ENCODE measurements at regions of chr21 and their contacts with region 1.

Region 1: DNA sequence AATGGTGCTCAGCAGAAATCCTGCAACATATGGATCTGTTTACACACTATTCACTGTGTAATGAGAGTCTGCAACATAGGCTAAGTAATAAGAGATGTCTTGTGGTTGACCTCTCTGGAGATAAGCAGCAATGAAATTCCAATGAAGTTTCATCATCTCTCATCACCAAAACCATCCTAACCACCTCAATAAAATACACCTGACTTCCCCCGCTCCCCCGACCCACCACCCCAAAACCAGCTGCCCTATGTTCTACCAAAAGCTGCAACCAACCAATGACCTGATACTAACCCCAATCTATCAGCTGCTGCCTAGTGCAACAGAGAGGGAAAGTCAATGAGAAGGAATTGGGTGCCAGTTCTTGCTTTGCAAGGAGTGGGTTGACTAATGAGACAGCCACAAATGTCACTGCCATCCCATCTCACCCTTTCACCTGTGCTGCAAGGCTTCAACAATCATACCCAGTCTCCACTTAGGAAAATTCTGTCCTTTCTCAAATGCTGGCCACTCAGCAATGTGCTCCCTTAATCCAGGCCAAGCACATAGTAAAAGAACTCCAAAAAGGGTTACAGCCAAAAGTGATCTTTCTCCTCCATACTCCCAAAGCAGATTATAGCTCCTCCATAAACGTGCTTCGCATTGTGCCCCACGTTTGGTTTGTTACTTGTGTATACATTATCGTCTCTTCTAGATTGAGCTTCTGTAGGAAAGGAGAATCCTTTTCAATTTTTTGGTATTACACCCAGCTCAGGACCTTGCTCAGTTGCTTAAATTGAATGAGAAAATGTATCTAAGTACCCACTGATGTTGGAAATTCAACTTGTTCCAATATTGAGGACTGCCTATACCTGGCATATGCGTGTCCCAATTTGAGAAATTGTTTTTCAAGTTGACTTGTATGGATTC is 29.0 kb downstream of the MRPL39 start:
- DNase-seq: no peak
- H3K4me3 ChIP-seq: no peak overlapping the region
- H3K27ac ChIP-seq: no peak overlapping the region
- H3K4me1 ChIP-seq: no peaks in the 10 kb centered on the region
- H3K27me3 ChIP-seq: no peaks in the 10 kb centered on the region
- CTCF ChIP-seq: no peak
- POLR2A ChIP-seq: no peak

Region 2: DNA sequence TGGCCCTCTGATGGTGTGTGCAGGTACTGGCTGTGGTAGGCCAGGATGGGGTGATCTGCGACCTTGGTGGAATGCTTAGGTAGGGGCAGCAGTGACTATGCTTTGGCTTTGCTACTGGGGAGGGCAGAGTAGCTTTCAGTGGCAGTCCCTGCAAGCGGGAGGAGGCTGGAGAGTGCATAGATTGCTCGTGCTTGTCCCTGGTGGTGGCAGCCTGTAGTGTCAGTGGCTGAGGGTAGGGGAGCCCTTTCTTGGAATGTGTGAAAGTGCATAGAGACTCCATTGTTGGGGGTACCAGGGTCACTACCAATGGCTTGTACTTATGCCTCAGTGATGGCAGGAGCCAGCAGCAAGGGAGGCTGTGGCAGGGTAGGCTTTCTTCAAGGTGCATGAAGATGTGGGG is 553.7 kb before region 1 on chr21:
- intact Hi-C with region 1: loop called (anchors 5 kb)
- DNase-seq: no peak
- H3K4me3 ChIP-seq: no peak overlapping the region
- H3K27ac ChIP-seq: no peak overlapping the region
- H3K4me1 ChIP-seq: no peaks in the 10 kb centered on the region
- H3K27me3 ChIP-seq: no peaks in the 10 kb centered on the region
- CTCF ChIP-seq: no peak
- POLR2A ChIP-seq: no peak

Region 3: GRCh38 chr21:25385911-25386474 is 192.3 kb before region 1 on chr21:
- intact Hi-C with region 1: no loop called
- DNase-seq: no peak
- H3K4me3 ChIP-seq: no peak overlapping the region
- H3K27ac ChIP-seq: no peak overlapping the region
- H3K4me1 ChIP-seq: no peaks in the 10 kb centered on the region
- H3K27me3 ChIP-seq: no peaks in the 10 kb centered on the region
- CTCF ChIP-seq: peak; percentile 44 to 58 (median 47)
- POLR2A ChIP-seq: no peak

Region 4: DNA sequence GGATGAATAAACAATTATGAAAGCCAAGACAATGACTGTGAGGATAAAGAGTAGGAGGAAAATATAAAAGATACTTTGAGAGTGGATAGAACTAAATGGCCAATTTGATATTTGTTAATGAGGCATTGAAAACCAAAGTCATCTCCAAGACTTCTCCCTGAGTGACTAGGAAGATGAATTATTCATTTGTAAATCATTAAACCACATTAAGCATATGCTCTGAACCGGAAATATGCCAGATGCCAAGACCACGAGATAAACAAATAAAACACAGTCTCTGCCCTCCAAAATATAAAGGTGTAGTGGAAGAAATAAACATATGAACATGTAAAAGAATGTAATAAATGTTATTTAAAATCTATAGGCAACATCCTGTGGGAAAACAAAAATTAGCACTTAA is 49.8 kb before region 1 on chr21:
- intact Hi-C with region 1: no loop called
- DNase-seq: no peak
- H3K4me3 ChIP-seq: no peak overlapping the region
- H3K27ac ChIP-seq: no peak overlapping the region
- H3K4me1 ChIP-seq: no peaks in the 10 kb centered on the region
- H3K27me3 ChIP-seq: no peaks in the 10 kb centered on the region
- CTCF ChIP-seq: no peak
- POLR2A ChIP-seq: no peak

Measured in vagina (tissue), 2 donors.